Endothelial cell of umbilical vein (primary cell): ENCODE measurements at regions of chr17 and their contacts with region 1.

Region 1: GRCh38 chr17:76458580-76459490 is 5.9 kb upstream of the UBE2O start:
- DNase-seq: peak; percentile 54
- H3K4me3 ChIP-seq: no peak overlapping the region
- H3K27ac ChIP-seq: no peak overlapping the region
- H3K4me1 ChIP-seq: no peaks in the 10 kb centered on the region
- H3K27me3 ChIP-seq: no peaks in the 10 kb centered on the region
- CTCF ChIP-seq: peak; percentile 39 to 82
- POLR2A ChIP-seq: no peak

Region 2: GRCh38 chr17:74759243-74759801 is 1699.5 kb before region 1 on chr17:
- CTCF ChIA-PET with region 1: no interaction called
- POLR2A ChIA-PET with region 1: no interaction called
- dilution Hi-C with region 1: no loop called
- intact Hi-C with region 1: no loop called
- DNase-seq: no peak
- H3K4me3 ChIP-seq: no peak overlapping the region
- H3K27ac ChIP-seq: no peak overlapping the region
- H3K4me1 ChIP-seq: peaks cover 7% of the 10 kb centered on the region
- H3K27me3 ChIP-seq: no peaks in the 10 kb centered on the region
- CTCF ChIP-seq: no peak
- POLR2A ChIP-seq: no peak

Region 3: GRCh38 chr17:76365256-76365903 is 93.5 kb before region 1 on chr17:
- CTCF ChIA-PET with region 1: interaction called, 12 read pairs
- POLR2A ChIA-PET with region 1: no interaction called
- dilution Hi-C with region 1: no loop called
- intact Hi-C with region 1: no loop called
- DNase-seq: no peak
- H3K4me3 ChIP-seq: no peak overlapping the region
- H3K27ac ChIP-seq: no peak overlapping the region
- H3K4me1 ChIP-seq: peaks cover 6% of the 10 kb centered on the region
- H3K27me3 ChIP-seq: no peaks in the 10 kb centered on the region
- CTCF ChIP-seq: peak; percentile 30 to 33
- POLR2A ChIP-seq: no peak

Region 4: DNA sequence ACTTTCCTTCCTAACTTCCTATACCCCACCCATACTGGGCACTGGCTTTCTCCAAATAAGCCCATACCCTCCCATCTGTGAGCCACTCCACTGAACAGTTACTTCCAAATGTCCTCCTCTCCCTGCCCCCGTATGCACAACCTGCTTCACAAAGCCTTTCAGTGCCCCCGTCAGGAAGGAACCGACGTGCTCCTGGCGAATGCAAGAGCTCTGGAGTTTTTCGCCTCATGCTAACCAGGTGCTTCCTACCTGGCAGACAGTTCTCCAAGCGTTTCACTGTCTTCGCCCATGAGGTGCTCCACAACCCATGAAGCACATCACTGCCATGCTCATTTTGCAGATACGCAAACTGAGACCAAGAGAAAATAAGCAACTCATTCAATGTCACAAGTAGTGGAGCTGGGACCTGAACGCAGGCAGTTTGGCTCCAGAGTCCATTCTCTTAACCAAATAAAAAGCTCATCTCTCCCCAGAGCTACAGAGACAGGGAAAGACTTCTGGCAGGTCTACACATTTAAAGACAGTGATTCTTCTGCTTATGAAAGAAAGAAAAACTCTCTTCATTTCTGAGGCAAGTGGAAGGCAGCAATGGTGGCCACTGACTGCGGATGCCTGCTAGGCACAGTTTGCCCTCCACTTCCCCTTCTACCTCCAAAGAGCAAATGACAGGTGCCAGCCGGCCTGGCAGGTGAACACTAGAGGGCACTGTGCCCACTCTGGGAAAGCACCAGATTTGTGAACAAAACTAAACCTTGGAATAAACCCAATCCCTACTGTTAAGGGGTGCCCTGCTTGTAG is 50.6 kb before region 1 on chr17:
- CTCF ChIA-PET with region 1: interaction called, 319 read pairs
- POLR2A ChIA-PET with region 1: no interaction called
- dilution Hi-C with region 1: no loop called
- intact Hi-C with region 1: loop called (anchors 1 kb)
- DNase-seq: peak; percentile 66
- H3K4me3 ChIP-seq: no peak overlapping the region
- H3K27ac ChIP-seq: no peak overlapping the region
- H3K4me1 ChIP-seq: no peaks in the 10 kb centered on the region
- H3K27me3 ChIP-seq: no peaks in the 10 kb centered on the region
- CTCF ChIP-seq: peak; percentile 92
- POLR2A ChIP-seq: no peak

Region 5: DNA sequence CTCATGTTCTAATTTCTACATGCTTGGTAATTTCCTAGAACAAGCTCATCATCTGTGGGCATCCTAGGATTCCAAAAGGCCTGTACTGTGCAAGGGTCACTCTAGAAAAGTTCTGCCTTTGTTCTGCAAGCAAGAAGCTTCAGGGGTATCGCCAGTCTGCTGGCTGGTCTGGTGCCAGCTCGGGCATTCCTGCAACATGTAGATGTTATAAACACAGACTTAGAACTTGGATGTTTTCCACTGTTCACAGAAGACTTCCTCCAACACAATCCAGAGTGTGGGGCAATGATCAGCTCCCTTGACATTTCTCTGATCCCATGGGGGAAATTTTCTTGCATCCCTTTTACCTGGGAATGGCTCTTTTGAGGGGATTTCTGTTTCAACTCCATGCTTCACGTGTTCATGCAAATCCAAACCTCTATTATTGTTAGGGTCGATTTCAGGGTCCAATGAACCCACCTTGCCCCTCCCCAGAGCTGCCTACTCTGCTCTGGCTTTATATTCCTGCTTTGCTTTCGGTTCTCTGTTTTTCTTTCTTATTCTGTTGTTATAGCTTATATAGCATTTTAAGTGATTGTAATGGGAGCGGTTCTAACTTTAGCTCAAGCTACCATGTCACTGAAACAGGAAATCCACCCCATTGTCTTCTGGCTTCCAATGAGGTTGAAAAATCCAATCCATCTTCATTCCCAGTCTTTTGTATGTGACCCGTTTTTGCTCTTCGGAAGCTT is 31.2 kb before region 1 on chr17:
- CTCF ChIA-PET with region 1: interaction called, 25 read pairs
- POLR2A ChIA-PET with region 1: no interaction called
- dilution Hi-C with region 1: no loop called
- intact Hi-C with region 1: no loop called
- DNase-seq: peak; percentile 84
- H3K4me3 ChIP-seq: peak overlapping the region in 1 of 3 experiments; percentile 28
- H3K27ac ChIP-seq: peak overlapping the region; percentile 45
- H3K4me1 ChIP-seq: peaks cover 22% of the 10 kb centered on the region
- H3K27me3 ChIP-seq: no peaks in the 10 kb centered on the region
- CTCF ChIP-seq: no peak
- POLR2A ChIP-seq: no peak

Region 6: DNA sequence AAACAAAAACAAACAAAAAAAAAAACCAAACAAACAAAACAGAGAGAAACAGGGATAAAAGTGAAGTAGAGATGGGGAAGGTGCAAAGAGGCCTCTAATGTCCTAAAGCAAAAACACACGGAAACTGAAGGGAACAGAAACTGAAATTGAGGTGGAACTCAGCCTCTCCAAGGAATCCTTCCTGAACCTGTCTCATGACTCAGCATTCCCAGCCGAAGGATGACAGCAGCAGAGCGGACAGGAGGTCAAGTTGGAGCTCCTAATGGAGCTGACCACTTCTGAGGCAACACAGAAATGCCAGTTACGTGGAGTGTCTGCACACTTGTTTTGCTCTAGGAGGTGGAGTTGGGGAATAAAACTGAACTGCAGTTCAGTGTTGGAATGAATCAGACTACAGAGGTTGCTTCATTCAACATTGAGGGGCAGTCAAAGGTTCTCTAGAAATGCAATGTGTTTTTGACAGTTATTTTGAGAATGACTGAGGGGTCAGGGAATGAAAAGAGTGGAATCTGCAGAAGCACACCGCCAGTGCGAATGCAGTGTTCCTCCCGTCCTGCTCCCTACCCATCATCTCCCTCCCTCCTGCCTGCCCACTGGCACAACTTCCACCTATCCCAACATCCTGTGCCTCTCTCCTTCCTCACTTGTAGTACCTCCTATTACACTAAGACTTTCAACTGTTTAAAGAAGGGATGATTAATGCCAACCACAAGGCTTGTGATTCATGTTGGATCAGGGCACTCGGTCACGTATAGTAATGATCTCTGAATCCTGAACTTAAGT is 12.2 kb before region 1 on chr17:
- CTCF ChIA-PET with region 1: interaction called, 21 read pairs
- POLR2A ChIA-PET with region 1: no interaction called
- dilution Hi-C with region 1: no loop called
- intact Hi-C with region 1: no loop called
- DNase-seq: peak; percentile 28
- H3K4me3 ChIP-seq: no peak overlapping the region
- H3K27ac ChIP-seq: no peak overlapping the region
- H3K4me1 ChIP-seq: peaks cover 47% of the 10 kb centered on the region
- H3K27me3 ChIP-seq: no peaks in the 10 kb centered on the region
- CTCF ChIP-seq: no peak
- POLR2A ChIP-seq: no peak

Region 7: DNA sequence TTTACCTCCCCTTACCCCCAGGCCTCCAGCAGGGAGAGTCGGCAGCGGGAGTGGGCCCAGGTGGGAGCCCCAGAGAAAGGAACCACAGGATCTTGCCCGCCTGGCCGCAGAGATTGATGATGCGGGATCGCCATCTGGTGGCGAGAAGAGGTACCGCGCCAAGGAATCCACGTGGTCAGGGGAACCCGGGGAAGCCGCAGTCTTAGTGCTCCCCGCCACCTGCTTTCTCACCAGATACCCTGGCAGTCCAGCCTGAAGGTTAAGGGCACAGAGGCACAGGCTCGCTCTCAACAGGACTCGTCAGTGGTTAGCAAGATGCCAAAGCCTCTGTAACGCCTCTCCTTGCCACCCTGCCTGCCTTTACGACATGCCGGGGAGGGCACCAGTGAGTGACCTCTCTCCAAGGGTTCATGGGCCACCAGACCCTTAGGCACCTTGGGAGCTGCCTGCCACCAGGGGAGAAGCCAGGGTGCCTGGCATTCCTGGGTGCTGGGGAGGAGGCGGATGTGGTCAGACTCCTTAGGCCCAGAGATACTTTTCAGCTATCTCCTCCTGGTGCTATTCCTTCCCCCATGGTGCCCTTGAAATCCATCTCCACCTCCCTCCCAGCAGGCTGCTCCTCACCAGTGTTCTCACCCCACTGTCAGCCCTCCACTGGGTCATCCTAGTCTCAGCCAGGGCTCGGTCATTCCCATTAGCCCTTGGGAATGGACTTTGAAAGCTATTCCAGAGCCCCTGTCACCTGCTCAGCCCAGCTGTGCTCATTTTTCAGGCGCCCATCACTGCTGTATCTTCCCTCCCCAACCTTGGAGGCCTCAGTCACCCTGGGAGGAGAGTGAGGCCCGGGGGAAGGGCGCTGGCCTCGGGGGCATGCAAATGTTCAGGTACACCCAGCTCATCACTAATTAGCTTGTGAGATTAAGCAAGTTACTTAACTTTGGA is 47.8 kb after region 1 on chr17:
- CTCF ChIA-PET with region 1: interaction called, 93 read pairs
- POLR2A ChIA-PET with region 1: interaction called, 6 read pairs
- dilution Hi-C with region 1: no loop called
- intact Hi-C with region 1: loop called (anchors 1 kb)
- DNase-seq: peak; percentile 71
- H3K4me3 ChIP-seq: no peak overlapping the region
- H3K27ac ChIP-seq: no peak overlapping the region
- H3K4me1 ChIP-seq: no peaks in the 10 kb centered on the region
- H3K27me3 ChIP-seq: peaks cover 0 to 4% of the 10 kb centered on the region in 2 experiments
- CTCF ChIP-seq: peak; percentile 87 to 95
- POLR2A ChIP-seq: no peak

Region 8: GRCh38 chr17:76681222-76682137 is 222.6 kb after region 1 on chr17:
- CTCF ChIA-PET with region 1: interaction called, 16 read pairs
- POLR2A ChIA-PET with region 1: no interaction called
- dilution Hi-C with region 1: no loop called
- intact Hi-C with region 1: no loop called
- DNase-seq: peak; percentile 72
- H3K4me3 ChIP-seq: no peak overlapping the region
- H3K27ac ChIP-seq: no peak overlapping the region
- H3K4me1 ChIP-seq: no peaks in the 10 kb centered on the region
- H3K27me3 ChIP-seq: no peaks in the 10 kb centered on the region
- CTCF ChIP-seq: peak; percentile 82 to 84
- POLR2A ChIP-seq: no peak